ENCODE measurements at regions of chr9 and their contacts with region 1.

Region 1: GRCh38 chr9:131393622-131394463 is at the start of gene PRRC2B:
- DNase-seq: peak in 1 of 2 donors; percentile 89
- H3K4me3 ChIP-seq: peak within 1 kb of the TSS; percentile 76 to 84
- H3K27ac ChIP-seq: peak within 1 kb of the TSS; percentile 88 to 98
- H3K4me1 ChIP-seq: peaks cover 21 to 24% of the 10 kb centered on the region in 2 donors
- H3K27me3 ChIP-seq: no peaks in the 10 kb centered on the region
- CTCF ChIP-seq: peak in 2 of 3 experiments; percentile 19 to 29
- total RNA-seq, gene PRRC2B: 199 TPM

Region 2: DNA sequence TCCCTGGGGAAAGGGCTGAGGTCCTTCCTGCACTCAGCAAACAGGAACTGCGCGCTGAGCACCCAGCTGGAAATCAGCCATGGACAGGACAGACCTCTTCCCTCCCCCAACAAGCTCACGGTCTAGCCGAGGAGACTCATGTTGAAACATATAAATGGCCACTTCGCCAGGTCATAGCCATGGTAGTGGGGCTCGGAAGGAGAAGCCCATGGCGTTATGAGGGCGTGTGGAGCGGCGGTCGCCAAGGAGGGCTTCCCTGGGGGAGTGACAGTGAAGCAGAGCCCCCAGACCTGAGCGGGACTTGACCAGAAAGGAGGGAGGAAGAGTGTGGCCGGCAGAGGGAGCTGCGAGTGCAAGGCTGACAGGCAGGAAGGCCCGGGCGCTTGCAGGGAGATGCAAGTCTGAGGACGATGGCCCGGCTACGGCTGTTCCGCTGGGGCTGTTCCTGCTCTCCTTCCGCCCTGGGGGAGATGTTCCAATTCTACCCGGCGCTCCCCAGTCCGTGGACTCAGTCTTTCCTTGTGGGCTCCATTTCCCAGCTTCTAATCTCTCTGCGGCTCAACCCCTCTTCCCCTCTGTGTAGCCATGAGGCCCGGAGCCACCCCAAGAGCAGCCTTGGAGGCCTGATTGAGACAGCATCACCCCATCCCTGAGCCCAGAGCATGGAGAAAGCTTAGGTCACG is 43.8 kb before region 1 on chr9:
- intact Hi-C with region 1: loop called (anchors 5 kb)
- DNase-seq: peak; percentile 32 to 92
- H3K4me3 ChIP-seq: peak overlapping the region in 1 of 2 donors; percentile 45
- H3K27ac ChIP-seq: no peak overlapping the region
- H3K4me1 ChIP-seq: no peaks in the 10 kb centered on the region
- H3K27me3 ChIP-seq: no peaks in the 10 kb centered on the region
- CTCF ChIP-seq: peak; percentile 82 to 89 (median 87)

Region 3: GRCh38 chr9:131432597-131433306 is 38.9 kb after region 1 on chr9:
- intact Hi-C with region 1: loop called (anchors 5 kb)
- DNase-seq: no peak
- H3K4me3 ChIP-seq: no peak overlapping the region
- H3K27ac ChIP-seq: no peak overlapping the region
- H3K4me1 ChIP-seq: peaks cover 4 to 18% of the 10 kb centered on the region in 2 donors
- H3K27me3 ChIP-seq: no peaks in the 10 kb centered on the region
- CTCF ChIP-seq: no peak

Measured in ascending aorta (tissue), 2 donors.